KBM-7 (cell line): ENCODE measurements at regions of chr5 and their contacts with region 1.

Region 1: DNA sequence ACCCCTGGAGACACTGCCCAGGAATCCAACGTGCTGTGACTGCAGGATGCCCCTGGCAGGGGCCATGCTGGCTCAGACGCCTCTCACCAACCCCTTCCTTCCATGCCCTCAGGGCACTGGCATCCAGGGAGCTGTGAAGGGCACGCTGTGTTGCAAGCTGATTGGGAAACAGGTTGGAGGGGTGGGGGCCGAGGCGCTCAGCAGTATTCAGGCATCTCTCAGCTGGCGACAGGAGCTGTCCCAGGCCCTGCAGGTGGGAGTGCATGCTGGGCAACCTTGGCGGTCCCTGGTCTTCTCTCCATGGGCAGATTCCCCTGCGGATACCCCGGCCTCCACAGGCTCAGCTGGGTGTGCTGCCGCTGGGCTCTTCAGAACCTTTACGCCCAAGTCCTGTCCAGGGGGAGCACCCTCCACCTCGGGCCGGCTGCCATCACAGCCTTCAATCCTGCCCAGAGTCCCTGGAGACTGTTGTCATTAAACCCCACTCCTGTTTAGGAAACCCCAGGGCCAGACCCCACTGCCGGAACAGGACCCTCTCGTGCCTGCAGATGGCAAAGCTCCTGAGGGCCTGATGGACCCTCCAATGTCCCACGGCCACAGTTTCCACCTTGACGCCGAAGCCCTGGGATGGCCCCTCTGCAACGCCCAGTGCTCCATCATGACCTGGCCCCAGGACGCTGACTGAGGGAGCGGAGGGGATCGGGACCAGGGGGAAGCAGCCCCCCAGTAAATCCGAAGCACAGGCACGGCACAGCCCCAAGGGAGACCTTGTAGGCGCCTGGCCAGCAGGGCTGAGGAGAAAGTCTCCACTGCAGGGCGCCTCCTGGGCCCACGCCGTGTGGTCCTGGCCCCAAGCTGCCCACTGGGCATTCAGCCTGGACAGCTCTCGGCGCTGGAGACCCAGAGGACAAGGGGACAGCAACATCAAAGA is 9.3 kb downstream of the TPPP start:
- DNase-seq: no peak

Region 2: DNA sequence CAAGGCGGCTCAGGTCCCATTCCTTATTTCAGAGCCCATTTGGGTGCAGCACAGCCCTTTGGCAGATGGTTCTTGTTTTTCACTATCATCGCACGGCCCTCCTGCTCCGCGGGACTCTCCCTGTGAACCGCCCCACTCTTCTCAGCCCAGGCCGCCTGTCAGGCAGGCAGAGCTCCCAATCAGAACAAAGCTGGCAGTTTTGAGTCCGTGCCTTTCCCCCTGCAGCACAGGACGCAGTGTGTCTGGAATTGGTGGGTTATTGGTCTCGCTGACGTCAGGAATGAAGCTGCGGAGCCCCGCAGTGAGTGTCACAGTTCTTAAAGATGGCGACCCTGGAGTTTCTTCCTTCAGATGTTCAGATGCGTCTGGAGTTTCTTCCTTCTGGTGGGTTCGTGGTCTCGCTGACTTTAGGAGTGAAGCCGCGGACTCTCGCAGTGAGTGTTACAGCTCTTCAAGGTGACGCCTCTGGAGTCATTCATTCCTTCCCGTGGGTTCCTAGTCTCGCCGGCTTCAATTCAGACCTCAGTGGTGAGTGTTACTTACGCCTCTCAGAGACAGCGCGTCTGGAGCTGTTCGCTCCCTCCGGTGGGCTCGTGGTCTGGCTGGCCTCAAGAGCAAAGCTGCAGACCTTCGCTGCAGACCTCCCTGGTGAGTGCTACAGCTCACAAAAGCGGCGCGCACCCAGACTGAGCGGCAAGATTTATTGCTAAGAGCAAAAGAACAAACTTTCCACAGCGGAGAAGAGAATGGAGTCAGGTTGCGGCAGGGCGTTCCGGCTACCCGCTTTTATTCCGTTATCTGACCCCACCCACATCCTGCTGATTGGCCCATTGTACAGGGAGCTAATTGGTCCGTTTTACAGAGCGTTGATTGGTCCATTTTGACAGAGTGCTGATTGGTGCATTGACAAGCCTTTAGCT is 93.2 kb after region 1 on chr5:
- in situ Hi-C with region 1: loop called (anchors 5 kb)
- DNase-seq: no peak